ENCODE measurements at regions of chr6 and their contacts with region 1.

Region 1: DNA sequence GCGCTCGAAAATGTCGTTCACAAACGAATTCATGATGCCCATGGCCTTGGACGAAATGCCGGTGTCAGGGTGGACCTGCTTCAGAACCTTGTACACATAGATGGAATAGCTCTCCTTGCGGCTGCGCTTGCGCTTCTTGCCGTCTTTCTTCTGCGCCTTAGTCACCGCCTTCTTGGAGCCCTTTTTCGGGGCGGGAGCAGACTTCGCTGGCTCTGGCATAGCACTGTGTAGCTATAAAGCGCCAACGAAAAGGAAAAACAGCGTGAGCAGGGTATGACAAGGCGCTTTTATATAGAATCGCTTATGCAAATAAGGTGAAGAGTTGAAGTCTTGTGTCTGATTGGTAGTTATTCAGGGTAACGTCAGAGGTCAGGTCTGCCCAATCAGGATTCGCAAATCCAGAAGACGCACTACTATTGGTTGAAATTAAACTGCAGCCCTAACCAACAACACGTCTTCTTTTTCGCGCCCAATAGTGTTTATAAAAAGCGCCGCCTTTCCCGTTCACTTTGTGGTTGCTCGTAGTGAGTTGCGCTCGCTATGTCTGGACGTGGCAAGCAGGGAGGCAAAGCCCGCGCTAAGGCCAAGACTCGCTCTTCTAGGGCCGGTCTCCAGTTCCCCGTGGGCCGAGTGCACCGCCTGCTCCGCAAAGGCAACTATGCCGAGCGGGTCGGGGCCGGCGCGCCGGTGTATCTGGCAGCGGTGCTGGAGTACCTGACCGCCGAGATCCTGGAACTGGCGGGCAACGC is 114.8 kb upstream of the PRSS16 start:
- DNase-seq: peak; percentile 85
- ATAC-seq: peak; percentile 86
- H3K4me3 Mint-ChIP-seq: no peak overlapping the region
- H3K27ac Mint-ChIP-seq: no peak overlapping the region
- H3K4me1 Mint-ChIP-seq: peaks cover 65% of the 10 kb centered on the region
- H3K27me3 Mint-ChIP-seq: no peaks in the 10 kb centered on the region
- CTCF ChIP-seq: no peak

Region 2: DNA sequence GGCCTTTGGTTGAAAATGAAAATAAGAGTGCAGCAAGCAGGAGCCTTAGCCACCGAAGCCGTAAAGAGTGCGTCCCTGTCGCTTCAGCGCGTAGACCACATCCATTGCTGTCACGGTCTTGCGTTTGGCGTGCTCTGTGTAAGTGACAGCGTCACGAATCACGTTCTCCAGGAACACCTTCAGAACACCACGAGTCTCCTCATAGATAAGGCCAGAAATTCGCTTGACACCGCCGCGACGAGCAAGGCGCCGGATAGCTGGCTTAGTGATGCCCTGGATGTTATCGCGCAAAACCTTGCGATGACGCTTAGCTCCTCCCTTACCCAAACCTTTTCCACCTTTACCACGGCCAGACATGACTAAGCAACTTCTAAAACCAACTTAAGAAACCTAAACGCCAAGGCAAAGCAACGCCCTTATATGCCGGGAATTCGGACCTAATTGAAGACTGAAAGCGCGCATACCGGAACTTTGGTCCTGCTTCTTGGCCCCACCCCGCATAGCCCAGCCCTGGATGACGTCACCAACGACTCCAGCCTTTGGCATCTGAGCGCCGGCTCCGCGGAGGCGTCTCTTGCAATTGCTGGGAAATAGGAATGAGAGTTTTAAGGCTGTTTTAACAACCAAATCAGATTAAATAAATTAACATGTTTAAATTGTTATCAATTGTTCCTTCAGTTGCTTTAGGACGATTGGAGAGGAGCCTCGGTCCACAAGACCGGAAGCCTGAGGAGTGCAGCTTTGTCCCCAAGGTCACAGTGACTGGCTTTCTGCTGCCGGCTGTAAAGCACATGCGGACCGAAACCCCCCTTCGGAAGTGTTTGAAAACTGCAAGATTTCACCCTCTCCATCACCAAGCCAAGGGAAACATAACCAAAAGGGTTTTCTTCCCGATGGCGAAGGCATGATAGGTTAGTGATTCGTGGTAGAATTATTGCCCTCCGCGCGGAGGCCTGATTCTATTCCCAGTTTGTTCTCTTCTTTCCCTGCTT is 847.3 kb before region 1 on chr6:
- CTCF ChIA-PET with region 1: no interaction called
- POLR2A ChIA-PET with region 1: interaction called, 16 read pairs
- DNase-seq: peak; percentile 96
- ATAC-seq: peak; percentile 73
- H3K4me3 Mint-ChIP-seq: peak overlapping the region; percentile 97
- H3K27ac Mint-ChIP-seq: peak overlapping the region; percentile 100
- H3K4me1 Mint-ChIP-seq: peaks cover 16% of the 10 kb centered on the region
- H3K27me3 Mint-ChIP-seq: peaks cover 4% of the 10 kb centered on the region
- CTCF ChIP-seq: no peak

Measured in WTC11 (cell line).